ENCODE measurements at regions of chr7 and their contacts with region 1.

Region 1: GRCh38 chr7:38222481-38223096 is 44.5 kb downstream of the STARD3NL start:
- DNase-seq: no peak
- H3K4me3 Mint-ChIP-seq: no peak overlapping the region
- H3K27ac Mint-ChIP-seq: no peak overlapping the region
- H3K4me1 Mint-ChIP-seq: peaks cover 35% of the 10 kb centered on the region
- H3K27me3 Mint-ChIP-seq: no peaks in the 10 kb centered on the region

Region 2: DNA sequence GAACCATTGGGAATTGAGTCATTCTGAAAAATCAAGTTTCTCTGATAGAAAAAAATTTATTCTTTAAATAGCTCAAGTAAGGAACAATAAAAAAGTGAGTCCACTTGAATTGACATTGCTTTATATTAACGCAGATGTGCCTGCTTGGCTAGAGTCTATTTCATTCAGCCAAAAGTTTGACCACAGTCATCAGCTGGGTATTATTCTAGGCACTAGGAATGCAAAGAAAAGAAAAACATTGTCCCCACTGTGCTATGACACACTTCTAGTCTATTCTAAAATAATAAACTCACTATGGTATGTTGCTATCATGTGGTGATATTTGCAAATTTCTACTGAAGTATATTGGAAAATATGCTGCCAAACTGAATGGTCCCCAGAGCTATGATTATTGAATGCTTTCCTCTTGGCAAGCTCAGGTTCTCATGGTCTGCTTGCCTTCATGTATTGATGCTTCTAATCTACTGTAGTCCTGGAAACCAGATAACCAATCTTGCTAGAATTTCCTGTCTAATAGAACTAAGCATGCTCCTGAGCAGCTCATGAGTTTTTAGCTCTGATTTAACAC is 314.3 kb before region 1 on chr7:
- intact Hi-C with region 1: no loop called
- DNase-seq: no peak
- H3K4me3 Mint-ChIP-seq: no peak overlapping the region
- H3K27ac Mint-ChIP-seq: no peak overlapping the region
- H3K4me1 Mint-ChIP-seq: no peaks in the 10 kb centered on the region
- H3K27me3 Mint-ChIP-seq: peaks cover 17% of the 10 kb centered on the region

Region 3: GRCh38 chr7:38178004-38178694 is 44.4 kb before region 1 on chr7 and contains the start of gene STARD3NL:
- intact Hi-C with region 1: loop called (anchors 2 kb)
- DNase-seq: peak; percentile 87
- H3K4me3 Mint-ChIP-seq: peak within 1 kb of the TSS; percentile 95
- H3K27ac Mint-ChIP-seq: peak within 1 kb of the TSS; percentile 89
- H3K4me1 Mint-ChIP-seq: peaks cover 36% of the 10 kb centered on the region
- H3K27me3 Mint-ChIP-seq: no peaks in the 10 kb centered on the region
- total RNA-seq, gene STARD3NL: 39.2 and 42.4 TPM in 2 replicates